Right ventricle myocardium superior (tissue), 1 donor: ENCODE measurements at regions of chr2 and their contacts with region 1.

Region 1: DNA sequence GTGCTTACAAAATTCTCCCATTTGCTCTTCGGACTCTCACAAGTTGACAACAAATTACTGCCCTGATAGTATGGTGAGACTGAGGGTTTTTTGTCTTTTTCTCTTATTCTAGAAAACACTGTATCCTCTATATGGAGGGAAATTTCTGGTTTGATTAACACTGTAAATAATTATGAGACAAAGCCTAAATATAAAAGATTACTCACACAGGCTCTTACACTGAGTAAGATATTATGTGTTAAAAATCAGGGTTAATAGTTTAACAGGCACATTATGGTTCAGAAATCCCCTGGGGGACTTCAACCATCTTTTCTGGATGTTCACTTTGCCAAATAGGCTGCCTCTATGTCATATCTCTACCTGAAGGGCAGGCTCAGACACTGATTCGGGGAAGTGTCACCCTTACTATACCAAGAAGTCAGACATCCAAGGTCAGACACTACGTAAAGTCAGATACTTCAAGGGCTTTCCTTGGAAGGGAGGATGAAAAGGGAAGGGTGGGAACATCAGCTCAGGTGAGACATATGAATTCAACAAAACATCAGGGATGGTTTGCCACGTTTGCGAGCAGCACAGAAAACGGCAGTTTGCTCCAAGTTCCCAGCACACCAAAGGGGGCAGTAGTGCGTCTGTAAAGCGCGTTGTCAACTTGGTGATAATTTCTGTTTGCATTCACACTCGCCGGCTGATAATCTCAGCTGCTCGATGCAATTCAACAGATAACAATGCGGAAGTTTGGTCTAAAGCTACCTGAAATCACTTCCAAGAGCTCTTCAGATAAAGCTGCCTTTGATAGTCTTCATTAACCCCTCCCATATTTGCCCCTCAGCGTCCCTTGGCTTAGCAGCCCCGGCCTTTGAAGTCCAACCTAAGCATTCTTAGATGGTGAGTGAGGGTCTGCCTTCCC is 972 bp upstream of the RASGRP3 start:
- DNase-seq: peak; percentile 81
- ATAC-seq: peak; percentile 71

Region 2: DNA sequence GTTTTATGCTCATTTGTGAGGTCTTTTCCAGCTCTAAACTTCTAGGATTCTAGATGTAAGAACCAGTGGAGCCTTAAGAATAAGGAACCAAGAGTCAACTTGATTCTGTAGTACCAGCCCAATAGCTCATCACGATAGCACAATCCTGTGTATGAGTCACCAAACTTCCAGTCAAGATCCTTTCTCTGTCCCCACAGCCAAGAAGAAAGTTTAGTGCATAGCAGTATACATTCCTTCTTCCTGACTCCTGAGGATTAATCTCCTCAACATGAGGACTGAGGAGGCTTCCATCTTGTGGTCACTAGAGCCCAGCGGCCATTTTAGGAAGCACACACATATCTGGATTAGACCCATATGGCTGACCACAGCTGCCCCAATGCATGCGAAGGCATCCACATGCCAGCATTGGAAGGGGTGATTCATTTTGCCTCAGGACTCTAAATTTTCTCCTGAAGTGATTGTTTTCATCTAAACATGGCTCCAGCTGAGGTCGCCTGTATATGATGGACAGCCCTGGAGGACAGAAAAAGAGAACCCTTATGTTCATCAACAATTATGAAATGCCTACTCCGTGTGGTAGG is 54.4 kb after region 1 on chr2:
- intact Hi-C with region 1: loop called (anchors 10 kb)
- DNase-seq: no peak
- ATAC-seq: no peak

Region 3: GRCh38 chr2:33541243-33541642 is 65.8 kb after region 1 on chr2:
- intact Hi-C with region 1: loop called (anchors 5 kb)
- DNase-seq: no peak
- ATAC-seq: peak; percentile 67